Esophagus squamous epithelium (tissue), 5 donors: ENCODE measurements at regions of chr18 and their contacts with region 1.

Region 1: DNA sequence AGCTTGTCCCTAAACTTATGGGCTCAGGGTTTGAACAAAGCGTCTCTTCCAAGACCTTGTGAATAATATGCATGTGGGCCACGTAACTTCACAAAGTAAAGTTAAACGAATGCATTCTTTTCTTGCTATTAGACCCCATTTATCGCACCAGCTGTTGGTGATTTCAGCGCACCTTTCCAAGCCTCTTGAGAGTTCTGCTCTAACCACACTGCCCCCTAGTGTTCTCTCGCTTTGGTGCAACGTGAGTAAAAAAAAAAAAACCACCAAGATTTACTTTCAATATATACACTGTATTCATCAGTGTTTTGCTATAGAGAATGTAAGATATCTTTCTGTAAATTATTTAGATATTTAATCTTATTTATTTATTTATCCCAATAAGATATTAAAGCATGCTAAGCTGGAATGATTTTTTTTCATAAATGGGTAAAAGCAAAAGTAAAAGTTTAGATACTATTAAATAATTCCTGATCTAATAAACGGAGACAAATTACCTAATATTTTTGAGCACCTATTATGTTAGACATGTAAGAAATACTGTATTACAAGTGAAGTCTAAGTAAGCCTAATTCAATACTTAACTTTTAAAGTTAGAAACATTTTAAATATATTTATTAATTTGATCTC is 459.5 kb downstream of the DLGAP1 start:
- DNase-seq: no peak
- H3K4me3 ChIP-seq: no peak overlapping the region
- H3K27ac ChIP-seq: no peak overlapping the region
- H3K4me1 ChIP-seq: peaks cover 0 to 6% (median 0%) of the 10 kb centered on the region in 3 donors
- H3K27me3 ChIP-seq: no peaks in the 10 kb centered on the region
- CTCF ChIP-seq: peak in 5 of 6 experiments; percentile 51 to 90 (median 62)
- POLR2A ChIP-seq: no peak

Region 2: GRCh38 chr18:3703732-3704176 is 291.8 kb before region 1 on chr18:
- intact Hi-C with region 1: loop called (anchors 10 kb)
- DNase-seq: no peak
- H3K4me3 ChIP-seq: no peak overlapping the region
- H3K27ac ChIP-seq: no peak overlapping the region
- H3K4me1 ChIP-seq: peaks cover 0 to 4% (median 0%) of the 10 kb centered on the region in 3 donors
- H3K27me3 ChIP-seq: no peaks in the 10 kb centered on the region
- CTCF ChIP-seq: peak in 5 of 6 experiments; percentile 48 to 68 (median 48)
- POLR2A ChIP-seq: no peak